ENCODE measurements at regions of chr3 and their contacts with region 1.

Region 1: DNA sequence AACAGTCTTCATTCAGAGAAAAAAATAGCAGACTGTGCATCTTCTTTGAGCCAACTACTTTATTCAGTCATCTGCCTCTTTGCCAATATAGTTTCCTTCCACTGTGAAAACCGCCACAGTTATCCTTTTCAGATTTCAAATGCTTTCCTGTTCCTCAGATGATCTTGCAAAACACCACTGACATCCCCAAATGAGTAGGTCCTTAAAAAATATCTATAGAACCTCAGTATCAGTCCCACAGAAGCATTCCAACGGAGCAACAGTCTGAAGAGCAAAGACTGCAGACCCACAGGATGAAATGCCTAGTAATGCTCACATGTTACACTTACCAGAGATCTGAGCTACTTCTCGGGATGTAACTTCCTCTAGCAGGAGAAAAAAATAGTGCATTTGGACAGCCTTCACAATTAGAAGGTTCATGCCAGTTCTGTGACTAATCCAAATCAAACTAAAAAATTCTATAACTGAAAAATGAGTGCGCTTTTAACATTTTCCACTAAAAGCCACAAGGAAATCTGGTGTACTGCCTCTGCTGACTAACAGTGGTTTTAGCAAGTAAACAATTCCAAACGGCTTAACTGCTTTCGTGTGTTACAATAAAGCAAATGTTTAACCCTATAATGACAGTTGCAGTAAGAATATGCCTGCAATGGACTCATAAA is at the start of gene ANKRD28:
- DNase-seq: peak; percentile 21 to 92
- H3K4me3 ChIP-seq: peak within 1 kb of the TSS; percentile 60
- H3K27ac ChIP-seq: peak within 1 kb of the TSS; percentile 92
- H3K4me1 ChIP-seq: peaks cover 83% of the 10 kb centered on the region
- H3K27me3 ChIP-seq: no peaks in the 10 kb centered on the region
- CTCF ChIP-seq: peak; percentile 54; the same call in 1 of the 2 replicates
- total RNA-seq, gene ANKRD28: 59.7 and 82.6 TPM in 2 replicates

Region 2: DNA sequence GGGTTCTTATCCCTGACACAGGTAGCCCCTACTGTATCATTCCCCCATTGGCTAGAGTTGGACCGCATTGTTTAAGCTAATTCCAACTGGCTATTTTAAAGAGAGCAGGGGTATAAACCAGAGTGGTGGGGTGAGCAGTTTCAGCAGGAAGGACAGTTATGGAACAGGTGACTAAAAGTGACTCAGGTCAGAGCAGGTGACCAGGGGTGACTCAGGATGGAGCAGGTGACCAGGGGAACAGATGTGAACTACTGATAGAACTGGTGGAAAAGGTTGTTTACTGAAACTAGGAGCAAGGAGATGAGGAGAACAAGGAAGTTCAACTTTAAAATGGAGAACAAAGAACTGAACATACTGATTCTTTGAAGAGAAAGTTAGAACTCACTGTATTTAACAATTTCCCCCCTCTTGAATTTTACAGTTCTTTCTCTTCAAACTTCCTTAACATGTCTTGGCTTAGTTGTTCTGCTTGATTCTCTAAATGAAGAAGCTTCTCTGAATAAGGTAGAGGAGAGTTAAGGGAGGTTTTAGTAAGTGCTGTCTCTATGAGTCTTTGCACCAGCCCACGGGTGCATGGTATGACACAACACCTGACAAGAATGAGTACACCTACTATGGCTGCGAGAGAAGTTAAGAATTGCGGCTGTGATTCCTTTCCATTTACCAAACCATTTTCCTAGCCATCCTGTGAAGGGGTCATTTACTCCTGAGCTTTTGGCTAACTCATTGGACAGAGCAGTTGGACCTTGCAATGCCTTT is 1834.5 kb before region 1 on chr3:
- CTCF ChIA-PET with region 1: no interaction called
- POLR2A ChIA-PET with region 1: no interaction called
- intact Hi-C with region 1: no loop called
- DNase-seq: peak; percentile 23 to 40
- H3K4me3 ChIP-seq: no peak overlapping the region
- H3K27ac ChIP-seq: peak overlapping the region; percentile 21; the same call in 1 of the 2 replicates
- H3K4me1 ChIP-seq: no peaks in the 10 kb centered on the region
- H3K27me3 ChIP-seq: no peaks in the 10 kb centered on the region
- CTCF ChIP-seq: no peak

Region 3: DNA sequence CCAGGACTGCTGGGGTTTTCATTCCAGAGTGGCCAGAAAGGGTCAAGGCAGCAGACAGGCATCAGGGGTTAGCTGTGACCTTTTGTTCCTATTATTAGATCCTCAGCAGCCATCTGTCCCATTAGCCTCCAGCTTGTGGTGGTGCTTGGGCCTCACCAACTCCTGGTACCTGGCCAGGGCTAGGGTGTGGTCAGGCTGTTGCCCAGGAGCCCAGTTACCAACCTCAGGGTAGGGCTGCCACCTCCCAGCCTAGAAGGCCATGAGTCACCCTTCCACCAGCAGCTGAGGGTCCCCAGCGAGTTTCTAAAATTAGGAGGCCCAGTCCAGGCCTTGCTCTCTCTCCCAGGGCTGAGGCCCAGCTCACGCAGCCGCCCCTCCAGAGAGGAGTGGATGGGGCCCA is 1660.8 kb before region 1 on chr3:
- CTCF ChIA-PET with region 1: no interaction called
- POLR2A ChIA-PET with region 1: interaction called, 14 read pairs
- intact Hi-C with region 1: no loop called
- DNase-seq: peak; percentile 51 to 83
- H3K4me3 ChIP-seq: no peak overlapping the region
- H3K27ac ChIP-seq: no peak overlapping the region
- H3K4me1 ChIP-seq: peaks cover 14% of the 10 kb centered on the region
- H3K27me3 ChIP-seq: no peaks in the 10 kb centered on the region
- CTCF ChIP-seq: no peak

Region 4: GRCh38 chr3:14863333-14864100 is 934.3 kb before region 1 on chr3:
- CTCF ChIA-PET with region 1: no interaction called
- POLR2A ChIA-PET with region 1: no interaction called
- intact Hi-C with region 1: no loop called
- DNase-seq: no peak
- H3K4me3 ChIP-seq: no peak overlapping the region
- H3K27ac ChIP-seq: no peak overlapping the region
- H3K4me1 ChIP-seq: no peaks in the 10 kb centered on the region
- H3K27me3 ChIP-seq: no peaks in the 10 kb centered on the region
- CTCF ChIP-seq: no peak; the same call in 1 of the 2 replicates

Region 5: GRCh38 chr3:15636003-15636709 is 161.6 kb before region 1 on chr3:
- CTCF ChIA-PET with region 1: interaction called, 3 read pairs
- POLR2A ChIA-PET with region 1: interaction called, 23 read pairs
- intact Hi-C with region 1: loop called (anchors 2 kb)
- DNase-seq: peak; percentile 70 to 93
- H3K4me3 ChIP-seq: peak overlapping the region; percentile 46; the same call in 1 of the 2 replicates
- H3K27ac ChIP-seq: peak overlapping the region; percentile 95
- H3K4me1 ChIP-seq: peaks cover 81% of the 10 kb centered on the region
- H3K27me3 ChIP-seq: no peaks in the 10 kb centered on the region
- CTCF ChIP-seq: no peak

Region 6: DNA sequence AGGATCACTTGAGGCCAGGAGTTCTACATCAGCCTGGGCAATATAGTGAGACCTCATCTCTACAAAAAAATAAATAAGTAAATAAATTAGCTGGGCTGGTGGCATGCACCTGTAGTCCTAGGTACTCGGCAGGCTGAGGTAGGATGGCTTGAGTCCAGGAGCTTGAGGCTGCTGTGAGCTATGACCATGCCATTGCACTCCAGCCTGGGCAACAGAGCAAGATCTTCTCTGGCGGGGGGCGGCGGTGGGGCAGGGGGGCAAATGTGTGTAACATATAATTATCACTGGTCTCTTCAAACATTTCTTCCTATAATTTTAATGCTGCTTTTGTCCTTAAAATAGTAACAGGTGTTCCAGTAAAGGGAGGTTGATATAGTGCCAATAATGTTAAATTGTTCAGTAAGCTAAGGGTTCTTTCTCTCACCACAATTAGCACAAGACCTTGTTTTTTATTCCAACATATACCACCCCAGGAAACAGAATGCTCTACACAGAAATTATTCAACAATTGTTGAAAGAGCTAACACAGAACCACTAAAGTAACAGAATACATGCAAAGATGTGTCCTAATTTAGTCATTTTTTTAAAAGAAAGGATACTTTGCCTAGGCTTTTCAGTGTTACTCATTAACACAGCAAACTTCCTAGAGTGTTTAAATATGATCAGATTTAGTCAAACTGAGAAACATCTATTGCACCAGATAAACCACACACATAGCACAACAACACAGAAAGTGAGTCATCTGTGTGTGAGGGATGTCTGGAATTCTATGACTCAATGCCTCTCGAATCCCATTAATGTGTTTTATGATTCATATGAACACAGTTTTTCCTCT is 29.1 kb before region 1 on chr3:
- CTCF ChIA-PET with region 1: interaction called, 6 read pairs
- POLR2A ChIA-PET with region 1: no interaction called
- intact Hi-C with region 1: loop called (anchors 2 kb)
- DNase-seq: peak in 1 of 2 experiments; percentile 94
- H3K4me3 ChIP-seq: no peak overlapping the region
- H3K27ac ChIP-seq: peak overlapping the region; percentile 82
- H3K4me1 ChIP-seq: peaks cover 25% of the 10 kb centered on the region
- H3K27me3 ChIP-seq: no peaks in the 10 kb centered on the region
- CTCF ChIP-seq: no peak

Region 7: GRCh38 chr3:15974647-15975046 is 176.9 kb after region 1 on chr3:
- CTCF ChIA-PET with region 1: no interaction called
- POLR2A ChIA-PET with region 1: no interaction called
- intact Hi-C with region 1: no loop called
- DNase-seq: no peak
- H3K4me3 ChIP-seq: no peak overlapping the region
- H3K27ac ChIP-seq: no peak overlapping the region
- H3K4me1 ChIP-seq: no peaks in the 10 kb centered on the region
- H3K27me3 ChIP-seq: no peaks in the 10 kb centered on the region
- CTCF ChIP-seq: 0 out of 2 replicates have a peak, but pooled peaks have one; percentile 26

Region 8: GRCh38 chr3:15989419-15989818 is 191.6 kb after region 1 on chr3:
- CTCF ChIA-PET with region 1: no interaction called
- POLR2A ChIA-PET with region 1: no interaction called
- intact Hi-C with region 1: no loop called
- DNase-seq: no peak
- H3K4me3 ChIP-seq: no peak overlapping the region
- H3K27ac ChIP-seq: no peak overlapping the region
- H3K4me1 ChIP-seq: no peaks in the 10 kb centered on the region
- H3K27me3 ChIP-seq: no peaks in the 10 kb centered on the region
- CTCF ChIP-seq: peak; percentile 54

Region 9: DNA sequence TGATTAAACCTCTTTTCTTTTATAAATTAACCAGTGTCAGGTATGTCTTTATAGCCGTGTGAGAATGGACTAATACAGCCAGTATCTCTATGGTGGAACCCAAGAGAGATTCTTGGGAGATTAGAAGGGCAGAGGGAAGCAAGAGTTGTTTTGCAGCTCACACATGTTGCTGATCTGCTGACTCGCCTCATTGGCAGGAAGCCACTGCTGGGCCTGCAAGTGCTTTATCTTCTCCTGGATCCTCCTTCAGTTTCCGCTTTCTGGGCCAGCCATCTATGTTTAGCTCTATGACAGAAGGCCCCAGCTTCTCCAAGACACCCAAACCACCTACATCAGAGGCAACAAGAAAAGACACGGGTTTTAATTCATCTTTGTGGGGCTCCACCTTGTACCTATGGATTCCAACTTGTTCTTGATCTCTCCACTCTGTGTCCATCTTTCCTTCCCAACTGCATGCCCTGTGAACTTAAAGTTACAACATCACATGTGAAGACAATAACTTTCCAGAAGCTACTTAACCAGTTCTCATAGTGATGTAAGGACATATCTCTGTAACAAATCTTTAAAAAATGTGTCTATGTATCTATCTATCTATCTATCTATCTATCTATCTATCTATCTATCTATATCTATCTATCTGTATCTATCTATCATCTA is 353.5 kb after region 1 on chr3:
- CTCF ChIA-PET with region 1: interaction called, 10 read pairs
- POLR2A ChIA-PET with region 1: no interaction called
- intact Hi-C with region 1: no loop called
- DNase-seq: no peak
- H3K4me3 ChIP-seq: no peak overlapping the region
- H3K27ac ChIP-seq: no peak overlapping the region
- H3K4me1 ChIP-seq: peaks cover 3% of the 10 kb centered on the region; the same call in 1 of the 2 replicates
- H3K27me3 ChIP-seq: no peaks in the 10 kb centered on the region
- CTCF ChIP-seq: no peak

Measured in PC-9 (cell line).